ENCODE measurements at regions of chr6 and their contacts with region 1.

Region 1: DNA sequence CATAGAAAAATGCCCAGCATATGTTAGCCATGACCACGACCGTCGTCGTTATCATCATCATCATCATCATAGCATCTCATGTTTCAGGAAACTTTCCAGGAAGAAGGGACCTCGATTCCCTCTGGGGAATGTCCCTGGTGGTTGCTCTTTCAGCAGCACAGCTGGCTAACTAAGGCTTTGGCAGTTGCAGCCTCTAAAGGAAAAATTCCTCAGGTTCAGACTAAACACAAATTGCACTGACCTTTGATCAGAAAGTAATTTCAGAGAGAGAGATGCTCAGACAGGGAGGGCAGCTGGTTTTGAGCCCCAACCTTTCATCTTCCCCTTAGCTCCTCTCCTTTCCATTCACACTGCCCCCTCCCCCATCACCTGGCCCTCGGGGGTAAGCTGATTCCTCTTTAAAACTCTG is 5.6 kb upstream of the CFB start:
- DNase-seq: no peak
- H3K4me3 Mint-ChIP-seq: no peak overlapping the region
- H3K27ac Mint-ChIP-seq: no peak overlapping the region
- H3K4me1 Mint-ChIP-seq: peaks cover under 1% of the 10 kb centered on the region
- H3K27me3 Mint-ChIP-seq: peaks cover 1% of the 10 kb centered on the region

Region 2: DNA sequence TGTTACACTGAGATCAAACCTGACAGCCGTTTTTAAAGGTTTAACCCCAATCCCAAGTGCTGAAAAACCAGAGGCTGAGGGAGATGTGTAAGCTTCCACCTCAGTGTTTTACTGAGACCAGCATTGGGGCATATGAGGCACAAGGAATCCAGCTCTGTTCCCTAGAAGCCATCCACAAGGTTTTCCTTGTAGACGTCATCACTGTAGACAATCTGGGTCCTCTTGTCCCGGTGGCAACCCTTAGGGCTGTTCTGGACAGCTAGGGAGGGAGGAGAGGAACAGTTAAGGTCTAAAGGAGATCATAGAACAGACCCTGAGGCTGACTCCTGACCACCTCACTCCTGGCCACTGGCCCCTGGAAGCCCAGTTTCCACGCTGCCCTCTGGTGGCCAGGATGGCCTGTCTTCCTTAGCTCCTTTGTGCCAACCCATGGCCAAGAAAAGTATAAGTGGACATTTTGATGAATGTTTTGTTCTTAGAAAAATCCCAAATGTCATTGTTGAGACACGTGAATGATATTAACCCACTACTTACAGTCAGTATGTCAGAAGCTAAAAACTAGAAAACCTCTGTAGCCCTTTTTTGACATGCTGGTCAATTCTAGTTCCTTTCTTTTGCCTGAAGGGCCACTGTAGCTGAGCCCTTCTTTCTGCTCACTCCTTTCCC is 12.0 kb after region 1 on chr6:
- CTCF ChIA-PET with region 1: interaction called, 16 read pairs
- intact Hi-C with region 1: no loop called
- DNase-seq: peak; percentile 60
- H3K4me3 Mint-ChIP-seq: no peak overlapping the region
- H3K27ac Mint-ChIP-seq: no peak overlapping the region
- H3K4me1 Mint-ChIP-seq: peaks cover 4% of the 10 kb centered on the region
- H3K27me3 Mint-ChIP-seq: no peaks in the 10 kb centered on the region

Measured in activated naive CD4-positive, alpha-beta T cell treated with anti-CD3 and anti-CD28 coated beads for 36 hours (primary cell).